ENCODE measurements at regions of chr12 and their contacts with region 1.

Region 1: GRCh38 chr12:121765573-121765972 is 27.9 kb downstream of the RHOF start:
- DNase-seq: no peak
- CTCF ChIP-seq: no peak

Region 2: DNA sequence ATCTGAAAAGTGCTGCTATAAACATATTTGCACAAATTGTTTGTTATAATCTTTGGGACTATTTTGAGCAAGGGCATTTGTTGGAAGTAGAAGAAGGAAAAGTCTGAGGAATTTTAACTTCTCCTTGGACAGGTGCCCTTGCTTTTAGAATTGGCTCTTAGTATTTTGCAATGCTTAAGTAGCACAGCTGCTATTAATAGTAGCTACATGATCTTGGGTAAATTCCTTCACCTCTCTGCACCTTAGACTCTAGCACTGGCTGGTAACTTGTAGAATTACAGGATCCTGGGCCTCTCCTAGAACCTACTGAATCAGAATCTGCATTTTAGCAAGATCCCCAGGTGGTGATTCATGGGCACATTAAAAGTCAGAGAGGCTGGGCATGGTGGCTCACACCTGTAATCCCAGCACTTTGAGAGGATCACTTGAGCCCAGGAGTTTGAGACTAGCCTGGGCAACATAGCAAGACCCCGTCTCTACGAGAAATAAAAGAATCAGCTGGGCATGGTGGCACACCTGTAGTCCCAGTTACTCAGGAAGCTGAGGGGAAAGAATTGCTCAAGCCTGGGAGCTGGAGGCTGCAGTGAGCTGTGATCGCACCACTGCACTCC is 63.8 kb before region 1 on chr12:
- in situ Hi-C with region 1: loop called (anchors 5 kb)
- DNase-seq: no peak
- CTCF ChIP-seq: no peak

Region 3: GRCh38 chr12:122123051-122123760 is 357.6 kb after region 1 on chr12:
- in situ Hi-C with region 1: no loop called
- DNase-seq: peak; percentile 82
- CTCF ChIP-seq: peak; percentile 74

Measured in GM13977 (cell line).